AG04449 (cell line): ENCODE measurements at regions of chr17 and their contacts with region 1.

Region 1: GRCh38 chr17:7219812-7220581 is at the starts of genes ACADVL and DLG4:
- DNase-seq: no peak
- H3K4me3 ChIP-seq: peak within 1 kb of the TSS; percentile 83
- CTCF ChIP-seq: no peak

Region 2: DNA sequence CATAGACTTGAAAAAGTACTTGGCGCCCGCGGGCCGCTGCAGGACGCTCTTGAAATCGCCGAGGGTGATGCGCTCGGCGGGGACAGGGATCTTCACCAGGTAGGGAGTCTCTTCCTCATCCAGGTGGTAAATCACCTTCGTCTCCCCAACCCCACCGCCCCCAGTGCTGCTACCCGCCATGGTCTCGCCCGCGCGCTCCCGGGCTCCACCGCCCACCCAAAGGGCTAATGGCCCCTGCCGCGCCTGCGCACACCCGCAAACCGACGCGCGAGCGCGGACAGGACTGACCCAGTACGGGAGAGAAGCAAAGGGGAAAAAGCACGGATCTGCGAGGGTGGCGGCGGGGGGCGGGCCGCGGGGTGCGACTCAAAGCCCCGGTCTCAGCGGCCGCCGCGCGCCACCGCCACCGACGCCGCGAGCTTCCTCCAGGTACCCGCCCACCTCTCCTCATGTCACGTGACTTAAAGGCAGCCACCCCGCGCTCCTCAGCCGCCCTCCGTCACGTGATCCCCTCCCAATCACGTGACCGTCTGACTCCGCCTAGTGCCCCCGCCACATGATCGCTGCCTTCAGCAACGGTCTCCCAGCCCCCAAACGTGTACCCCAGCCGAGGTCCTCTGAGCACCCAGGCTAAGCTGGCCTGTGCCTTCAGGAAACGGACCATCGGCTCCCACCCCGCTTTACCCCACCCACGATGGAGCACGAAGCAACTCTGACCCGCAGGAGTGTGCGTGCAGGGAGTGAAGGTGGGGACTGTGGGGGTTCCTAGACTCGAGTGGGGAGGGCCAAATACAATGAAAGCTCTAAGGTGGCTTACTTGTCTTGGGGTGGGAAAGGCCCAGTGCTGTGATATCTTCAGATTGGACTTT is 14.3 kb after region 1 on chr17 and contains the start of gene DVL2:
- CTCF ChIA-PET with region 1: interaction called, 12 read pairs
- POLR2A ChIA-PET with region 1: interaction called, 82 read pairs
- DNase-seq: no peak
- H3K4me3 ChIP-seq: peak within 1 kb of the TSS; percentile 84
- CTCF ChIP-seq: no peak

Region 3: GRCh38 chr17:7239091-7240027 is 19.4 kb after region 1 on chr17 and contains the start of gene PHF23:
- CTCF ChIA-PET with region 1: interaction called, 6 read pairs
- POLR2A ChIA-PET with region 1: interaction called, 82 read pairs
- DNase-seq: peak; percentile 95
- H3K4me3 ChIP-seq: peak within 1 kb of the TSS; percentile 96
- CTCF ChIP-seq: no peak